ENCODE measurements at regions of chr2 and their contacts with region 1.

Region 1: DNA sequence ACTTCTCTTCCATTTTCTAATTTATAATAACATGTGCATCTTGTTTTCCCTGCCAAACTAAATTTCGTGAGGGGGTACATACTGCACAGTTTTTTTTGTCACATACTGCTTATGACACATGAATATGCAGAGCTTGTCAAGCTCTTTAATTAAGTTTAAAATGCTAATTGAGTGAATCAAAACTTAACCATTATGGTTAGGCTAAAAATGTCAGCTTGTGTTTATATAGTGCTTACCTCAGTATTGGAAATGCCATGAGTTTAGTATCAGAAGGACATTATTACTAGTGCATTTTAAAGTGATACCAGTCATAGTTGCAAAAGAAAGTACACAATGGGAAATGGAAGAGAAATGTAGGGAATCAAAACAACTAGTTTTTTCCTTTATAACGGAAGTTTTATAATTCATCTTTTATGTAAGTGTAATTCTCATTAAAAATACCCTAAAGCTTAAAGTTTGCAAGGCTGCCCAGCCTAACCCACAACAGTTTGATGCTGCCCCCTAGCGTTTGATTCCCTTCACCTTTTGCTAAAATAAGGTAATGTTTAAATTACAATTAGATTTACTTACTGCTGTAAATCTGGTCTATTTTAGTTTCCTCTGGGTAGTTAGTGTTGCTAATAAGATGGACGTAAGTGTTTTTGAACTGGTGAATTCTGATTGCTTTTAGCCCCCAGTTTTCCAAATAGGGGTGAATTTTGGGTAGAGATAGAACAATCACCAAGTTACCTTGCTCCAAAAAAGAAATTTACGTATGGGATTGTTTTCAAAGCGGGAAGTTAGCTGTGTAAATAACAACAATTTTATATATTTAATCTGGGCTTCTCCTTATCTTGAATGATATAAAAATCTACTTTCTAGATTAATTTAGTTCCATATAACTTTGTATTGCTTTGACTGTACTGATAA is 3.2 kb downstream of the SLC39A10 start:
- DNase-seq: peak in 7 of 10 donors; percentile 46 to 89 (median 68)

Region 2: DNA sequence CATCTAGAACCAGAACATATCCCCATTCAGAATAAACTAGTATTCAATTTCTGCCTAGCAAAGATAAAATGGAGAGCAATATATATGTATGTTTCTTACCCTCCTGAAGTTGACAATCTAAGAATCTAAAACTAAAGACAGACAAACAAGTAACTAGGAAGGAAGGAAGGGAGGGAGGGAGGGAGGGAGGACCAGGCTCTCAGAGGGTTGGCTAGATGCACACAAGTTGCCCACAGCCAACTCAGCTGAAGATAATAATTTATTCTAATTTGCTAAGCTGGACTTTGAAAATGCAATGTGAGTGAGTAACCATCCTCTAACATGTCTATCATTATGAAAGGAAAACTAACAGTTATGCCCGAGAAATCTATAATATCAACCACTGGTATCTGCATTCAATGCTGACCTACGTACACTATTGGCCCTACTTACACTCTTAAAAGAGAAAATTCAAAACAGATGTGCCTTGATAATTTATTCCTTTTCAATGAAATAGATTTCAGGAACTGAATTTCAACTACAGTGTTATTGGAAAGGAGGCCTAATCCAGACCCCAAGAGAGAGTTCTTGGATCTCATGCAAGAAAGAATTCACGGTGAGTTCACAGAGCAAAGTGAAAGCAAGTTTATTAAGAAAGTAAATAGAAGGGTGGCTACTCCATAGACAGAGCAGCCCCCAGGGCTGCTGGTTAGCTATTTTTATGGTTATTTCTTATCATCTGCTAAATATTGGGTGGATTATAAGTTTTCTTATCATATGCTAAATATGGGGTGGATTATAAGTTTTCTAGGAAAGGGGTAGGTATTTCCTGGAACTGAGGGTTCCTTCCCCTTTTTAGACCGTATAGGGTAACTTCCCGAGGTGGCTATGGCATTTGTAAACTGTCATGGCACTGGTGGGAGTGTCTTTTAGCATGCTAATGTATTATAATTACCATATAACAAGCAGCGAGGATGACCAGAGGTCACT is 291.7 kb before region 1 on chr2:
- intact Hi-C with region 1: no loop called
- DNase-seq: no peak

Region 3: DNA sequence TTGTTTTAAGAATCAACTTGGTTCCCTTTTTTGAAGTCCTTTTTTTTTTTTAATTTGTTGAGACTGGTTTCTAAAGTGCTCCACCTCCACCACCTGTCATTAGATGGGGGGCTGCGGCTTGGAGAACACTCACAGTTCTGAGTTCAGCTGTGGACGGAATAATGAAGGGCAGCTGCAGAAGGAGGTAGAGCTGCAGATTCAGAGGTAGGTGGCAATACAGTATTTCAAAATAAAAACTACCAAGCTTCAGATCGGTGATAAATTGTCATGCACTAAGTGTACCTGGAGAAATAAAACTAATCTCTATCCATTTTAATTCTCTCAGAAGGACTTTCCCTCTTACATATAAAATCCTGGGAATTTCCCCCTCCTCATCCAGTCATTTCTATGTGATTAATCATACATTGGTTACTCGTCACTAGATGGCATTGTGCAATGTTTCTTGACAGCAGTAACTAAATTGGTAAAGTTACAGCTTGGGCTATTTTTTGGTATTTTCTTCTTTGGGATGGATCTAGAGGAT is 84.3 kb before region 1 on chr2:
- intact Hi-C with region 1: loop called (anchors 1 kb)
- DNase-seq: no peak

Region 4: DNA sequence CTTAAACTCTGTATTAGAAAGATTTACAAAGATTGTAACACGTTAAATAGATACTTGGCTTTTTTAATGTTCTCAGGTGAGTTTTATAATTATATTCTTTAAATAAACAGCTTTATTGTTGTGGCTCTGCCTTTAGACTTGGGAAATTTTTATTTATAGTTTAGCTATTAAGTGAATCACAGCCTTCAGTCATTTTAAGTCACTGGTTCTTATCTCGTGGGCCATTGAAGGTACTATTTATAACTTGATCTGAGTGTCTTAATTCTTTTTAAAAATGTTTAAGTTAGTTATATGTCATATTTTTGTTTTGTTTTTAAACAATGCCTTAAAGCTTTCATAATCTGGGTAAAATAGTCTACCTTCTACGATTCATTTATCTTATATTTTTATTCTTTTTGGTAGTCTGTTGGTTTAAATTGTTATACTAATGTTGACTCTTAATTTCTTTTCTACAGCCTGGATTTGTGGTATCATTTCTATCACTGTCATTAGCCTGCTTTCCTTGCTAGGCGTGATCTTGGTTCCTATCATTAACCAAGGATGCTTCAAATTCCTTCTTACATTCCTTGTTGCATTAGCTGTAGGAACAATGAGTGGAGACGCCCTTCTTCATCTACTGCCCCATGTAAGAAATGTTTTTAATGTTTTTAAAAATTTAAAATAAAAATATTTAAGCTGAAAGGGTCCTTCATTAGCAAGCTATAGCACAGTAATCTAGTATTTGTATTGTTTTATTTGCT is 46.1 kb after region 1 on chr2:
- intact Hi-C with region 1: no loop called
- DNase-seq: no peak

Region 5: GRCh38 chr2:195945061-195945460 is 284.8 kb after region 1 on chr2:
- intact Hi-C with region 1: no loop called
- DNase-seq: no peak

Region 6: DNA sequence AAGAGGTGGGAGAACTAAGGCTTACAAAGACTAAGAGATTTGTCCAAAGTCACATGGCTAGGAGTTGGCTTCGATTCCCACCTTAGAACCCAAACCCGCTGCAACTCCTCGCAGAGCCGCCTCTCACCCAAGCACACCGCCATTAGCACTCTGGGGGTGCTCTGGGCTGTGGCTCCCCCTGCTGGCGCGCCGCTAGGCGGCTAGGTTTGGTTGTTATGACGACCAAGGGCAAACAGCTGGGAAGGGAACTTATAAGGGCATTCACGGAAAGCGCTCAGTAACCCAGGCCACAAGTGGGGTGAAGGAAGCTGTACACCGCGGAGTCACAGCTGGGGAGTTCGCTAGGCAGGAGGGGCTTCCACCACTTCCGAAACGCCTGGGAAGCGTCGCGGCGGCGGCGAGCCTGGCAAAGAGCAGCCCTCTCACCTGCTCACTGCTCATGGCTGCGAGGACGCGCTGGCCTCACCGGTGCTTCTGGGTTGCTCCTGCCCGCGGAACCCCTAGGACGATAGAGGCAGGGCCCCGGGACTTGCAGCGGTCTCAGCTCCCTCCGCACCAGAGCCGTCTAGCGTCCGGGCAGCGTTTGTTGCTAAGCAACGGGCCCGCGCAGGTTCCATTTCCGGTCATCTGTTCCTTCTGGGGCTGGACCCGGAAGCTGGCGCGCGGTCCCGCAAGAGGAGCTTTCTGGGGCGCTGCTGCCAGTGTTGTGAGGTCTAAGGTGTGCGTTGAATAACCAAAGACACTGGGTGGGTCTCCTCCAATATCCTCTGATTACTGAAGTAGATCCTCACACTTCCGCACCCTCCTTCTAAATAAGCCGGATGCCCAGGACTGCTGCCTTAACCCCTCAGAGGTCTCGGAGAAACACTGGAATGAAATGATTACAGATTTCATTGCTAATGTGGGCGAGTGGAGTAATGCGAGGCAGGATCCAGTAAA is 408.3 kb after region 1 on chr2 and contains the start of gene DNAH7:
- intact Hi-C with region 1: loop called (anchors 5 kb)
- DNase-seq: peak; percentile 83 to 98 (median 88)

Measured in posterior cingulate gyrus (tissue), 11 donors.